ENCODE measurements at regions of chr16 and their contacts with region 1.

Region 1: DNA sequence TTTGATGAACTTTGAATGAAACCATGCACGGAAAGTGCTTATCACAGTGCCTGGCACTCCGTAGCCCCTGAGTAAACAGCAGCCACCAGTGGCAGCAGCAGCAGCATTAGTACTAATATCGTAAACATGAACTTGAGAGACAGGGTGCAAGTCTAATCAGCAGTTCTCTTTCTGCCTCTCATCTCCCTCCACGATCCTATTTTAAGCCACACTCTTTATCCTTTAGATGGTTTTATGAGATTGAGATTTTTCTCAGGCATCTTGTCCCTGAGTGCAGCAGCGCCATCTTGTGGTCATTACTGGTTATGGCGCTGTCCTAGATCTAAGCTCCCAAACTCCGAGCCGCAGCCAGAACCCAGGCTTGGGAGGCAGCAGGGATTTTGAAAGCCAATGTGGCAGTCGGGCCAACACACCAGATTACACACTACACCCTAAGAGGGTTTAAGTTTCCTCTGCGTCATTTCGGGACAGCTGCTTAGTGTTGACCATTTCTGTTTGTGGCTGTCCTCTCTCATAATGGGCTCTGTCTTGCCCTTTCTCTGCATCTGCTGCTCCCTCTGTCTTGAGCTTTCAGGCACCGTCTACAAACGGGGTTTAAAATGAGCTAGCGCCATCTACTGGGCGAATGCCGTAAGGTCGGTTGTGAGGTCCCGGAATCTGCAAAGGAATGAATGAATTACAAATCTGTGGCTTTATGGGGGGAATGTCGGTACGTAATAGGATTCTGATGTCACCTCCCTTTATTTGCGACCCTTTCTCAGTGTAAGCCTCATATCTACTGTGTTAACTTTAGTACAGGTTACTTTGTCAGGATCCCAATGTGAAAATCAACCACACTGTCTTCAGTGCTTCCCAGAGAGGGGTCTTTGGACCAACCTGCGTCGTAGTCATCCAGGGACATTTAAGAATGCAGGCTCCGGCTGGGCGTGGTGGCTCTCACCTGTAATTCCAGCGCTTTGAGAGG is 64.5 kb downstream of the CYLD start:
- DNase-seq: peak; percentile 81
- ATAC-seq: peak; percentile 95
- H3K4me3 ChIP-seq: no peak overlapping the region
- H3K27ac ChIP-seq: no peak overlapping the region
- H3K4me1 ChIP-seq: peaks cover 4% of the 10 kb centered on the region; the same call in 1 of the 2 replicates
- H3K27me3 ChIP-seq: no peaks in the 10 kb centered on the region
- CTCF ChIP-seq: peak; percentile 84 to 90 (median 89)
- EP300 ChIP-seq: no peak
- POLR2A ChIP-seq: no peak
- RAD21 ChIP-seq: peak; percentile 87

Region 2: GRCh38 chr16:50024684-50025536 is 781.5 kb before region 1 on chr16 and contains the start of gene CNEP1R1:
- CTCF ChIA-PET with region 1: interaction called, 17 read pairs
- POLR2A ChIA-PET with region 1: no interaction called
- RAD21 ChIA-PET with region 1: interaction called, 9 read pairs
- SMC1A ChIA-PET with region 1: interaction called, 5 read pairs
- in situ Hi-C with region 1: no loop called
- intact Hi-C with region 1: no loop called
- DNase-seq: peak; percentile 93
- ATAC-seq: peak; percentile 98
- H3K4me3 ChIP-seq: peak within 1 kb of the TSS; percentile 76
- H3K27ac ChIP-seq: peak within 1 kb of the TSS; percentile 64
- H3K4me1 ChIP-seq: 0 out of 2 replicates have a peak, but pooled peaks cover 3% of the 10 kb centered on the region
- H3K27me3 ChIP-seq: no peaks in the 10 kb centered on the region
- CTCF ChIP-seq: peak; percentile 100; a peak in 5 of 6 replicates
- EP300 ChIP-seq: no peak
- POLR2A ChIP-seq: peak; percentile 84
- RAD21 ChIP-seq: peak; percentile 82
- polyA plus RNA-seq, gene CNEP1R1: 11.5 to 15.7 TPM

Region 3: GRCh38 chr16:50326949-50327402 is 479.4 kb before region 1 on chr16:
- CTCF ChIA-PET with region 1: interaction called, 15 read pairs
- POLR2A ChIA-PET with region 1: no interaction called
- RAD21 ChIA-PET with region 1: interaction called, 20 read pairs
- SMC1A ChIA-PET with region 1: interaction called, 19 read pairs
- in situ Hi-C with region 1: no loop called
- intact Hi-C with region 1: loop called (anchors 5 kb)
- DNase-seq: peak; percentile 25
- ATAC-seq: peak; percentile 93
- H3K4me3 ChIP-seq: no peak overlapping the region
- H3K27ac ChIP-seq: no peak overlapping the region; the same call in 1 of the 2 replicates
- H3K4me1 ChIP-seq: peaks cover 3% of the 10 kb centered on the region; the same call in 1 of the 2 replicates
- H3K27me3 ChIP-seq: no peaks in the 10 kb centered on the region
- CTCF ChIP-seq: peak; percentile 45 to 76 (median 55)
- EP300 ChIP-seq: no peak
- POLR2A ChIP-seq: no peak
- RAD21 ChIP-seq: peak; percentile 72

Region 4: DNA sequence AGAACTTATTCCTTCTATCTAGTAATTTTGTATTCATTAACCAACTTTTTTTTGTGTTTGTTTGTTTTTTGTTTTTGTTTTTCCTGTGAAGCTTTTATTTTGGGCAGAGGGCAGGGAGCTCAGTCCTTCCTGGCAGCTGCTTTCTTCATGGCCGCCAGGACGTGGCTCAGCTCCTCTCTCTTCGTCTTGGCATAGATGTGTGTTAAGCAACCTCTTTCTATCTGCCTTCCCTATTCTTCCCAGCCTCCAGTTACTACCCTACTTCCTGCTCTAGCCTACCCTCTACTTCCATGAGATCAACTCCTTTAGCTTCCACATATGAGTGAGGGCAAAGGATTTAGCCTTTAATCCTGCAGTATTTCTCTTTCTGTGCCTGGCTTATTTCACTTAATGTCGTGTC is 429.4 kb before region 1 on chr16:
- CTCF ChIA-PET with region 1: interaction called, 14 read pairs
- POLR2A ChIA-PET with region 1: no interaction called
- RAD21 ChIA-PET with region 1: interaction called, 7 read pairs
- SMC1A ChIA-PET with region 1: interaction called, 7 read pairs
- in situ Hi-C with region 1: no loop called
- intact Hi-C with region 1: no loop called
- DNase-seq: no peak
- ATAC-seq: no peak
- H3K4me3 ChIP-seq: no peak overlapping the region
- H3K27ac ChIP-seq: no peak overlapping the region
- H3K4me1 ChIP-seq: no peaks in the 10 kb centered on the region
- H3K27me3 ChIP-seq: no peaks in the 10 kb centered on the region
- CTCF ChIP-seq: no peak
- EP300 ChIP-seq: no peak
- POLR2A ChIP-seq: no peak
- RAD21 ChIP-seq: no peak

Region 5: GRCh38 chr16:50528820-50529219 is 277.6 kb before region 1 on chr16:
- CTCF ChIA-PET with region 1: no interaction called
- POLR2A ChIA-PET with region 1: no interaction called
- RAD21 ChIA-PET with region 1: no interaction called
- SMC1A ChIA-PET with region 1: no interaction called
- in situ Hi-C with region 1: no loop called
- intact Hi-C with region 1: no loop called
- DNase-seq: no peak
- ATAC-seq: no peak
- H3K4me3 ChIP-seq: no peak overlapping the region
- H3K27ac ChIP-seq: no peak overlapping the region
- H3K4me1 ChIP-seq: no peaks in the 10 kb centered on the region
- H3K27me3 ChIP-seq: no peaks in the 10 kb centered on the region
- CTCF ChIP-seq: no peak
- EP300 ChIP-seq: no peak
- POLR2A ChIP-seq: no peak
- RAD21 ChIP-seq: no peak

Region 6: DNA sequence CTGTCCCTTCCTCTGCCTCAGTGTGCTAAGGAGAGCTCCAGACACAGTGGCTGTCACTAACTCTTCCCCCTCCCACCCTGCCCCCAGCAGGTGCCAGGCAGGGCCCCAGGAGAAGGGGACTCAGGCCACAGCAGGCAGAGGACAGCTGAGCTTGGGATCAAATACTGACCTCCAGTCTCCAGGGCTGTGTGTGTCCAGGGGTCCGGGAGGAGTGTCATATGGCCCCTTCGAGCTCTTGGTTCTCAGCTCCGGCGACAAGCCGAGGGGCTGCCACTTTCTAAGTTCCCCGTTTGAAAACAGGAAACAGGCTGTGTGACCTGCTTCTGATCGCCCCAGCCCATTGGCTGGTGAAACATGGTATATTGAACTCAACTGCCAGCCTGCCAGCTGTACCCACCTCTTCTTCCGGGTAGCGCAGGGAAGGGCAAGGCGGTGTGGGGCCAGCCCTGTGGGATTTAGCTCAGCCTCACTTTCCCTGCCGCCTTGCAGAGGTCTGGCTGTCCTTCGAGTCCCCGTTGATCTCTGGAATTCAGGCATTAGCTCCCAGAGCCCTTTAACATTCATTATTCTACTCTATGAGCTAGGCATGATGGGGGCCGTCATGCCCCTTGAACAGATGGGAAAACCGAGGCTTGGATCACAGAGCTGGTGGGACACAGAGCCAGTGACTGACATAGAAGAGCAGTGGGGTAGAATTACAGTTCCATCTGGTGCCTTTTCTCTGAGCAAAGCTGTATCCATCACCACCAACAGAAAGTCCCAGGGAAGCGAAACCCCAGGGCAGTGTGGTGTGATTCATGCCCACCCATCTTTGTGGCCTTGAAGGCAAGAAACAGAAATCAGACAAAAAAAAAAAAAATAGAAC is 125.1 kb before region 1 on chr16 and contains the start of gene SNX20:
- CTCF ChIA-PET with region 1: interaction called, 293 read pairs
- POLR2A ChIA-PET with region 1: no interaction called
- RAD21 ChIA-PET with region 1: interaction called, 12 read pairs
- SMC1A ChIA-PET with region 1: interaction called, 5 read pairs
- in situ Hi-C with region 1: no loop called
- intact Hi-C with region 1: no loop called
- DNase-seq: peak; percentile 63
- ATAC-seq: peak; percentile 65
- H3K4me3 ChIP-seq: peak within 1 kb of the TSS; percentile 72
- H3K27ac ChIP-seq: peak within 1 kb of the TSS; percentile 84
- H3K4me1 ChIP-seq: peaks cover 50% of the 10 kb centered on the region
- H3K27me3 ChIP-seq: no peaks in the 10 kb centered on the region
- CTCF ChIP-seq: no peak
- EP300 ChIP-seq: no peak
- POLR2A ChIP-seq: peak; percentile 68
- RAD21 ChIP-seq: no peak
- polyA plus RNA-seq, gene SNX20: 4.6 to 6.9 TPM

Region 7: GRCh38 chr16:50747207-50747956 is 59.0 kb before region 1 on chr16:
- CTCF ChIA-PET with region 1: interaction called, 76 read pairs
- POLR2A ChIA-PET with region 1: interaction called, 5 read pairs
- RAD21 ChIA-PET with region 1: interaction called, 29 read pairs
- SMC1A ChIA-PET with region 1: interaction called, 12 read pairs
- in situ Hi-C with region 1: no loop called
- intact Hi-C with region 1: loop called (anchors 2 kb)
- DNase-seq: peak; percentile 57
- ATAC-seq: peak; percentile 73
- H3K4me3 ChIP-seq: peak overlapping the region; percentile 62; the same call in 1 of the 2 replicates
- H3K27ac ChIP-seq: peak overlapping the region; percentile 75
- H3K4me1 ChIP-seq: peaks cover 20% of the 10 kb centered on the region
- H3K27me3 ChIP-seq: no peaks in the 10 kb centered on the region
- CTCF ChIP-seq: peak; percentile 37 to 68 (median 59); a peak in 5 of 6 replicates
- EP300 ChIP-seq: no peak
- POLR2A ChIP-seq: no peak
- RAD21 ChIP-seq: peak; percentile 79

Region 8: GRCh38 chr16:50789757-50790156 is 16.6 kb before region 1 on chr16:
- CTCF ChIA-PET with region 1: interaction called, 41 read pairs
- POLR2A ChIA-PET with region 1: no interaction called
- RAD21 ChIA-PET with region 1: interaction called, 3 read pairs
- SMC1A ChIA-PET with region 1: interaction called, 24 read pairs
- in situ Hi-C with region 1: no loop called
- intact Hi-C with region 1: no loop called
- DNase-seq: no peak
- ATAC-seq: no peak
- H3K4me3 ChIP-seq: no peak overlapping the region
- H3K27ac ChIP-seq: no peak overlapping the region
- H3K4me1 ChIP-seq: no peaks in the 10 kb centered on the region
- H3K27me3 ChIP-seq: no peaks in the 10 kb centered on the region
- CTCF ChIP-seq: no peak
- EP300 ChIP-seq: no peak
- POLR2A ChIP-seq: no peak
- RAD21 ChIP-seq: no peak

Region 9: GRCh38 chr16:50940275-50940854 is 134.0 kb after region 1 on chr16:
- CTCF ChIA-PET with region 1: no interaction called
- POLR2A ChIA-PET with region 1: no interaction called
- RAD21 ChIA-PET with region 1: no interaction called
- SMC1A ChIA-PET with region 1: no interaction called
- in situ Hi-C with region 1: no loop called
- intact Hi-C with region 1: no loop called
- DNase-seq: no peak
- ATAC-seq: no peak
- H3K4me3 ChIP-seq: no peak overlapping the region
- H3K27ac ChIP-seq: no peak overlapping the region
- H3K4me1 ChIP-seq: no peaks in the 10 kb centered on the region
- H3K27me3 ChIP-seq: peaks cover 0 to 3% of the 10 kb centered on the region in 2 experiments; a peak in 2 of 4 replicates
- CTCF ChIP-seq: no peak
- EP300 ChIP-seq: no peak
- POLR2A ChIP-seq: no peak
- RAD21 ChIP-seq: no peak